OCI-LY7 (cell line): ENCODE measurements at regions of chr2 and their contacts with region 1.

Region 1: GRCh38 chr2:26072925-26073768 is 39.3 kb downstream of the RAB10 start:
- DNase-seq: no peak
- H3K4me3 ChIP-seq: no peak overlapping the region
- H3K27ac ChIP-seq: no peak overlapping the region
- H3K4me1 ChIP-seq: peaks cover 19% of the 10 kb centered on the region
- CTCF ChIP-seq: no peak

Region 2: DNA sequence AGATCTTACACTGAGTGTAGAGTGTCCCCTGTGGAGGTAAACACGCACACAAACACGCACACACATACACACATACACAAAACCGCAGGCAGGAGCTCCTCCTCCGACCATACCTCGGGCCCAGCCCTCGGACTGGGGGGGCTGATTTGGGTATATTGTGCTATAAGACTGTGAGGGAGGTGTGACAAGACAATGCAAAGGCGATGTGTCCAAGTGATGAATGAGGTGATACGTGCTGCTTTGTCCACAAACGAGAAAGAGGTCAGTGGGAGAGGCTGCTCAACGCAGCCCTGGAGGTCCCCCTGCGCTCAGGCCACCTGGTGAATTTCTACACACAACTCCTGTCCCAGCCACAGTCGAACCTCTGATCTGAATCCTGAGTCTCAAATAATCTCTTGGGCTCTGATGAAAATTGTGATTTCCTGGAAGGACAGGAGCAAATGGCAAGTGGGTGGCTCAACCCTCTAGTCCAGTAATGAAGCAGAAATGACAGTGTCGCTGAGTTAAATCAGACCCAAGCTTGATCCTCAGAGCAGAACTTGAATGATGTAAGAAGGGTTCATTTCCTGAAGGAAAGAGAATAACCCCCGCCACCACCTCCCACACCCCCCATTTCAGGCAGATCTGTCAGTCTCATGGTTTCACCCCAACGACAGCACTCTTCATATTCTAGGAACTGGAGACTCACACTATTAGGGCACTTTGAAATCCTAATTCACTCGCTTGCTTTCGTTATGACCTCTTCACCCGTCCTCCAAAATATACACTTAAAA is 146.0 kb before region 1 on chr2:
- CTCF ChIA-PET with region 1: no interaction called
- POLR2A ChIA-PET with region 1: no interaction called
- intact Hi-C with region 1: no loop called
- DNase-seq: no peak
- H3K4me3 ChIP-seq: no peak overlapping the region
- H3K27ac ChIP-seq: no peak overlapping the region
- H3K4me1 ChIP-seq: no peaks in the 10 kb centered on the region
- CTCF ChIP-seq: no peak

Region 3: GRCh38 chr2:26086155-26086637 is 13.0 kb after region 1 on chr2:
- CTCF ChIA-PET with region 1: no interaction called
- POLR2A ChIA-PET with region 1: interaction called, 10 read pairs
- intact Hi-C with region 1: no loop called
- DNase-seq: no peak
- H3K4me3 ChIP-seq: no peak overlapping the region
- H3K27ac ChIP-seq: no peak overlapping the region
- H3K4me1 ChIP-seq: no peaks in the 10 kb centered on the region
- CTCF ChIP-seq: no peak